Activated T-helper 2 cell treated with anti-CD3 and anti-CD28 coated beads, Interferon-gamma antibody, Interleukin-2, Interleukin-4, amounts not matched to agents 10 μg/mL and 5 μg/mL and 100 μg/mL, durations not matched to agents 14 hours and 24 hours and 36 hours (primary cell): ENCODE measurements at regions of chr22 and their contacts with region 1.

Region 1: GRCh38 chr22:50525390-50526068 is at the start of gene SCO2:
- DNase-seq: peak; percentile 97
- H3K4me3 Mint-ChIP-seq: peak within 1 kb of the TSS; percentile 94
- H3K27ac Mint-ChIP-seq: peak within 1 kb of the TSS; percentile 81
- H3K4me1 Mint-ChIP-seq: peaks cover 24% of the 10 kb centered on the region
- H3K27me3 Mint-ChIP-seq: no peaks in the 10 kb centered on the region
- total RNA-seq, gene SCO2: 3.8 and 8.7 TPM in 2 replicates

Region 2: DNA sequence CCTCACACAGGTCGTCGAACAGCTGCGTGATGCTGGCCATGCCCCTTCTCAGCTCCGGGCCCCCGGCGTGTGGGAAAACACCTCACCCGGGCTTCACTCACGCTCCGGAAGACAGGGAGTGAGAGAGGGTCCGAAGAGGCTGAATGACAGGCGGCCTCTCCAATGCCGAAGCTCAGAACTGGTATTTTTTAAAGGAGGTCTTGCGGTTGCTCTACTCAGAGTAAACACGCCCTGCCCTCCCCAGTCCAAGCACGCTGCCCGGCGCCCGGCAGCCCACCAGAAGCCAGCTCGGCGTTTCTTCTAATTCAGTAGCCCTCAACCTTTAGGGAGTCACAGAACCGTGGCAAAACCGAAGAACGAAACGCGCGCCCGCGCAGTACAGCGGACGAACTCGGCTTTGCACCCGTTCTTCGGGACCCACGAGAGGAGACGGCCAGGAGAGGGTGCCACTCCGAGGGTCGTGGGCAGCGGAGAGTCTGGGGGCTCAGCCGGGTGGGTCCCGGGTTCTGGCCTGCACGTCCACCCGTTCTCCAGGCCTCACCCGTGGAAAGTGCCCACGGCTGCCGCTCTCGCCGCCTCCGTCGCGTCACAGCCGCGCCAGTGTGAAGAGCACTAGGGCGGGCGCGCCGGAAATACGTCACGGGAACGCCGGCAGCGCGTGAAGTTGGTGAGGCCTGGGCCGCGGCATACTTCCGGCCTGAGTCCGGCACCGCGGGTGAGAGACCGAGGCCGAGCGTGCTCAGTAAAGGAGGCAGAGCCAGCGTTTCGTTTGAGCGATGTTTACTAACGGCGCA is 280.9 kb before region 1 on chr22 and contains the start of gene TUBGCP6:
- intact Hi-C with region 1: loop called (anchors 10 kb)
- DNase-seq: peak; percentile 92
- H3K4me3 Mint-ChIP-seq: peak within 1 kb of the TSS; percentile 100
- H3K27ac Mint-ChIP-seq: peak within 1 kb of the TSS; percentile 100
- H3K4me1 Mint-ChIP-seq: peaks cover 12% of the 10 kb centered on the region
- H3K27me3 Mint-ChIP-seq: no peaks in the 10 kb centered on the region
- total RNA-seq, gene TUBGCP6: 48.8 and 49.6 TPM in 2 replicates

Region 3: GRCh38 chr22:50474668-50475492 is 50.6 kb before region 1 on chr22 and contains the start of gene SBF1:
- intact Hi-C with region 1: loop called (anchors 5 kb)
- DNase-seq: peak; percentile 87
- H3K4me3 Mint-ChIP-seq: peak within 1 kb of the TSS; percentile 96
- H3K27ac Mint-ChIP-seq: peak within 1 kb of the TSS; percentile 86
- H3K4me1 Mint-ChIP-seq: peaks cover 41% of the 10 kb centered on the region
- H3K27me3 Mint-ChIP-seq: peaks cover 9% of the 10 kb centered on the region
- total RNA-seq, gene SBF1: 102 and 106 TPM in 2 replicates

Region 4: DNA sequence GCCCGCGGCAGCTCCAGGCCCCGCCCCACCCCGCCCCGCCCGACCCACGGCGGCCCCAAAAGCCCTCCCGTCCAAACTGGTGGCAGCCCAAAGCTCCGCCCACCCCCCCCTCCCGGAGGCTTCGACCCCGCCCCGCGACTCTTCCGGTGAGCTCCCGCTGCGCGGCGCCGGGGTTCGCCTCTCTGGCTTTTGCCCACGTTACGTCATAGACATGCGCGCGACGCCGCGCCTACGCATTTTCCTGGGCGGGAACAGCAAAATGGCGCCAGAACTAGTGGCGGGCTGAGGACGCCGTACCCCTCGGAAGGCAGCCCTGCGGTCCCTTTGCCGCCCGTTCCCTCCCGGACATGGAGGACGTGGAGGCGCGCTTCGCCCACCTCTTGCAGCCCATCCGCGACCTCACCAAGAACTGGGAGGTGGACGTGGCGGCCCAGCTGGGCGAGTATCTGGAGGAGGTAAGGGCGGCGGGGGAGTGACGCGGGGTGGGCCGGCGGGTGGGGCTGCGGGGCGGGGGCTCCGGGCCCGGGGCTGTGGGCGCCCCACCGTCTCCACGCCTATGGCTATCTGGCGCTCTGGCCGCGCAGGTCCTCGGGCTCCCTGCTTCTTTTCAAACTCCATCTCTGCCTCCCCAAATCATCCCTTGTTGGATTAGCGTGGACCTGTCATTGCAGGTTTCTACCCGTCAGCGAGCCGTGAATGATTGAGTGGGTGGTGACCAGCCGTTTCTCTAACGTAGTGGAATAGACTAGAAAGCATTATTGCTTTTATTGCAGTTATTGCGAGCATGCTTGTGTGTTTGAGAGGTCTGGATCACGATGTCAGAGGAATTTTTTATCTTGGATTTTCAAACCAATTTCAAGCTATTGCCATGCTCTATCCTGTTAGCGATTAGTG is 17.3 kb before region 1 on chr22 and contains the start of gene NCAPH2:
- intact Hi-C with region 1: loop called (anchors 1 kb)
- DNase-seq: peak; percentile 96
- H3K4me3 Mint-ChIP-seq: peak within 1 kb of the TSS; percentile 96
- H3K27ac Mint-ChIP-seq: peak within 1 kb of the TSS; percentile 94
- H3K4me1 Mint-ChIP-seq: peaks cover 16% of the 10 kb centered on the region
- H3K27me3 Mint-ChIP-seq: no peaks in the 10 kb centered on the region
- total RNA-seq, gene NCAPH2: 112 and 115 TPM in 2 replicates

Region 5: DNA sequence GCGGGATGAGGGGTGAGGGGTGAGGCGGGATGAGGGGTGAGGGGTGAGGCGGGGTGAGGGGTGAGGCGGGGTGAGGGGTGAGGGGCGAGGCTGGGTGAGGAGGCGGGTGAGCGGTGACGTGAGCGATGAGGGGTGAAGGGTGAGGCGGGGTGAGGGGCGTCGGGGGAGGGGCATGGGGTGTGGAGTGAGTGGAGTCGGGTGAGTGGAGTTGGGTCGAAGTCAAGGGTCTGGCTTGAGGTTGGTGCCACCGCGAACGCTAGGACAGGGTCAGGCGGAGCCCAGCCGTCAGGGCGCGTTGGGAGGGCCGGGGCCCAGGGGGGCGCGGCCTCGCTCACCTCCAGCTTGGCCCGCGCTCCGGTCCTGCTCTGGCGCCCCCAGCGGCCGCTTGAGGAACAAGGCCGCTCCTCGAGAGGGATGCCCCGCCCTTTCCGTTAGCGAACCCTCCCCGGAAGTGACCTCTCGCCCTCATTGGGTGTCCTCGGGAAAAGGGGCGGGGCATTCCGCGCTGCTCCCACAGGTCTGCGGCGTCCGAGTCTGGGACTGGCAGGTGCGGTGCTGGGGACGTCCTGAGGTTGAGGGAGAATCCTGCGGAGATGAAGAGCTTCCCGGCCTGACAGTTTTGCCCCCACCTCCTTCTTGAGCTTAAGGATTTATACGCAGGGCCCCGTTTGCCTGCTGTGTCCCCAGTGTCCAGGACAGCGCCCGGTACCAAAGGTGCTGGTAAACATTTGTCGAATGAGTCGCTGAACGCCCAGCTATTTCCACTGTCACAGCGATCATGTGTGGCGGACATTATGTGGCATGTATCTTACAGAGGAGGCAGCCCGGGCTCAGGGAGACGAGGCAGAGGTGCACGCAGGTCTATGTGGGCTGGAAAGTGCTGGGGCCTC is 37.2 kb after region 1 on chr22 and contains the start of gene SYCE3:
- intact Hi-C with region 1: loop called (anchors 1 kb)
- DNase-seq: peak; percentile 96
- H3K4me3 Mint-ChIP-seq: peak within 1 kb of the TSS; percentile 89
- H3K27ac Mint-ChIP-seq: peak within 1 kb of the TSS; percentile 66
- H3K4me1 Mint-ChIP-seq: peaks cover 16% of the 10 kb centered on the region
- H3K27me3 Mint-ChIP-seq: peaks cover 20% of the 10 kb centered on the region
- total RNA-seq, gene SYCE3: 0.62 TPM in 1 of 2 replicates, not detected in the other